Tibial artery (tissue), 4 donors: ENCODE measurements at regions of chr7 and their contacts with region 1.

Region 1: DNA sequence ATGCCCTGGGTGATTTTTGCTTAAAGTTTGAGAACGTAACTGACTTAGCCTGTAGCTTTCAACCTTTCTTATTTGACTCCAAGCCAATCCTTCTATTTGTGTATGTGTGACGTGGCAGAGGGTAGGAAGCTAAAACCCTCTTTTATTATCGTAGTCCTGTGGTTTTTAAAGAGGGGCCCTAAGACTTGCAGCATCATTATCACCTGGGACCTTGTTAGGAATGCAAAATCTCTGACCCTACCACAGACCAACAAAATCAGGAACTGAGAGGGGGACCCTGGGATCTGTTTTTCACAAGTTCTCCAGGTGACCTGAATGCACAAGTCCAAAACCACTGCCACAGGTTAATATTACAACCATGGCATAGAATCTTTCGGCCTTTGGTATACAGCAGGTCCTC is 80.1 kb downstream of the OSBPL3 start:
- DNase-seq: no peak
- H3K4me3 ChIP-seq: no peak overlapping the region
- H3K27ac ChIP-seq: no peak overlapping the region
- H3K4me1 ChIP-seq: no peaks in the 10 kb centered on the region
- H3K27me3 ChIP-seq: no peaks in the 10 kb centered on the region
- CTCF ChIP-seq: no peak

Region 2: DNA sequence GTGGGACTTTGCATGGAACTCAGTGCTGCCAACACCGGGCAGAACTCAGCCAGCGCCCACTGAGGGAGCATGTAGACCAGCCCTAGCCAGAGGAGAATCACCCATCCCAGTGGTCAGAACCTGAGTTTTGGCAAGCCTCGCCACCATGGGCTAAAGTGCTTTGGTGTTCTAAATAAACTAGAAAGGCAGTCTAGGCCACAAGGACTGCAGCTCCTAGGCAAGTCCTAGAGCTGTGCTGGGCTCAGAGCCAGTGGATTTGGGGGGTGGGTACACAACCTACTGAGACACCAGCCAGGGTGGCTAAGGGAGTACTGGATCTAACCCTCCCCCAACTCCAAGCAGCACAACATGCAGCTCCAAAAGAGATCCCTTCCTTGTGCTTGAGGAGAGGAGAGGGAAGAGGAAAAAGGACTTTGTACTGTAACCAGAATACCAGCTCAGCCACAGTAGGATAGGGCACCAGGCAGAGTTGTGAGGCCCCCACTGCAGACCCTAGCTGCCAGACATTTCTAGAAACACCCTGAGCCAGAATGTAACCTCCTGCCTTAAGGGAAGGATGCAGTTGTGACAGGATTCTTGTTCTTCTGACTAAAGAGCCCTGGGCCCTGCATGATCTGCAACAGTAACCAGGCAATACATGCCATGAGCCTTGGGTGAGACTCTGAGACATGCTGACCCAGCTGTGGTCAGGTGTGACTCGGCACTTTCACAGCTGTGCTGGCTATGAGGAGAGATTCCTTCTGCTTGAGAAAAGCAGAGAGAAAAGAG is 167.1 kb before region 1 on chr7:
- intact Hi-C with region 1: no loop called
- DNase-seq: peak in 1 of 2 donors; percentile 56
- H3K4me3 ChIP-seq: no peak overlapping the region
- H3K27ac ChIP-seq: no peak overlapping the region
- H3K4me1 ChIP-seq: peaks cover 0 to 35% (median 7%) of the 10 kb centered on the region in 4 donors
- H3K27me3 ChIP-seq: no peaks in the 10 kb centered on the region
- CTCF ChIP-seq: no peak

Region 3: DNA sequence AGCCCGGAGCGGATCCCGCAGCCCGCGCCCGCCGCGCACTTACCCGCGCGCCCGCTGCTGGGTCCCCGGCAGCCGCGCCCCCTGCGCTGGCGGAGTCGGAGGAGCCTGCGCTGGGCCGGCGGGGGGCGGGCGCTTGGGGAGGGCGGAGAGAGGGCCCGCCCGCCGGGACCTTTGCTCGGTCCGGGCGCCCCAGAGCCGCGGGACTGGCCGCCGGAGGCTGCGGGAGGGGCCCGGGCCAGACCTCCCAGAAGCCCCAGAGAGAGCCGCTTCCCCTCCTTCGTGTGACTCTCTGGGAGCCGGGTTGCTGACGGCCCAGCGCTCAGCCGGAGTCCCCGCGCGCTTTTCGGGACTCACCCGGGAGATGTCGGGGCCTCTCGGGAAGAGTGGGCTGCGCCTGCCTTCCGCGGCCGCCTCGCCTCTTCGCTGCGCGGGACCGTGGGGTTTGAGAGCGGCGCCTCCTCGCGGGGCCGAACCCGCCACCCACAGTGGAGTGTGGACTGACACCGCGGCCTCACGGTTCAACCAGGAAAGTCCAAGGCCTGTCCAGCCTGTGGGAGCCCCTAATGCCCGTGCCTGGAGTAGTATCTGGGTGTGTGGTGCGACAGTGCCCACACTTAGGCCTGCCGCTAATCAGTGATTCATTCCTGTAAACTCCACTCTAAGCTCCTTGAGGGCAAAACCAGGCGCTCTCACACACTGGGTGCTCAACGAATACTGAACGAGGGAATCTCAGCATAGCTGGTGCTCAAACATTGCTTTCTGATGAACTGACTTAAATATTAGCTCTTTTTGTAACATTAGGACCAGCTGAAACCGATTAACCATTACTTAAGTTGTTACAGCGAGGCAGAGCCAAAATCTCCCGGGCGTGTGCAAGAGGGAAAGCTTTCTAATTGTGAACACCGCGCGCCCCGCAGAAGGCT is 142.3 kb before region 1 on chr7 and contains the start of gene GSDME:
- intact Hi-C with region 1: no loop called
- DNase-seq: peak; percentile 41 to 82
- H3K4me3 ChIP-seq: peak within 1 kb of the TSS; percentile 74 to 80
- H3K27ac ChIP-seq: peak within 1 kb of the TSS; percentile 83 to 86
- H3K4me1 ChIP-seq: peaks cover 0 to 11% (median 8%) of the 10 kb centered on the region in 4 donors
- H3K27me3 ChIP-seq: no peaks in the 10 kb centered on the region
- CTCF ChIP-seq: no peak

Region 4: DNA sequence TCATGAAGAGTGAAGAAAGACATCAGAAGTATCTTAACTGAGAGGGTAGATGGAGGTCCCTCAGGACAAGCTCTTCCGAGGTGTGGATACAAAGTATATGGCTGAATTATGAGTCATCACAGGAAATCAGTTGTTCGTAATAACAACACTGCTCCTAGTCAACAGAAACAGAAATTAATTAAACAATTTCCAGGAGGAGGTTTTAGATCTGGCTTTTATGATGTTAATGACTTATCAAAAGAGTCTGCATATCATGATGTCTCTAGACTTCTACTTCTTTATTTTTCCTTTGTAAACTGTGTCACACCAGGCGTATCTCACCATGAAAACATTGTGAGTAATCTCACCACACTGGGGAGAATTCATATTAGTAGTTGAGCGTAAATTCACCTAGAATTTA is 48.8 kb after region 1 on chr7:
- intact Hi-C with region 1: no loop called
- DNase-seq: no peak
- H3K4me3 ChIP-seq: no peak overlapping the region
- H3K27ac ChIP-seq: no peak overlapping the region
- H3K4me1 ChIP-seq: no peaks in the 10 kb centered on the region
- H3K27me3 ChIP-seq: no peaks in the 10 kb centered on the region
- CTCF ChIP-seq: no peak

Region 5: DNA sequence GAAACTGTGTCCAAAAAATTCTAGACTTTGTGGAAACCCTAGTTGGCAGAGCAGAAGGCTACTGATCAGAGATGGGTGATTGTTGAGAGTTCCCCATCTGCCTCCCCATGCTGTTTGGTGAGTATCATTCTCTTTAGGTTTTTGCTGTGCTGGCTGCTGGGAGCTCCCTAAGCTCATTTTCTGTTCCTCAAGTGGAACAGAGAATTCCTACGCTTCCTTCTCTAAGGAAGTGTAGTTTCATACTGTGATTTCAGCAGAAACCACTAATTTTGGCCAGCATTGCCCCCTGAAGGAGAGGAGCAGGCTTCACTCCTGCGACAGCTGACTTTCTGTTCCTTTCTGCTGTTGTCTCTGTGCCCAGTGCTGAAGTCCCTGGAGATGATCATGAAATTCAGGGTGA is 683.7 kb after region 1 on chr7:
- intact Hi-C with region 1: loop called (anchors 5 kb)
- DNase-seq: no peak
- H3K4me3 ChIP-seq: no peak overlapping the region
- H3K27ac ChIP-seq: no peak overlapping the region
- H3K4me1 ChIP-seq: no peaks in the 10 kb centered on the region
- H3K27me3 ChIP-seq: no peaks in the 10 kb centered on the region
- CTCF ChIP-seq: no peak